ENCODE measurements at regions of chr7 and their contacts with region 1.

Region 1: DNA sequence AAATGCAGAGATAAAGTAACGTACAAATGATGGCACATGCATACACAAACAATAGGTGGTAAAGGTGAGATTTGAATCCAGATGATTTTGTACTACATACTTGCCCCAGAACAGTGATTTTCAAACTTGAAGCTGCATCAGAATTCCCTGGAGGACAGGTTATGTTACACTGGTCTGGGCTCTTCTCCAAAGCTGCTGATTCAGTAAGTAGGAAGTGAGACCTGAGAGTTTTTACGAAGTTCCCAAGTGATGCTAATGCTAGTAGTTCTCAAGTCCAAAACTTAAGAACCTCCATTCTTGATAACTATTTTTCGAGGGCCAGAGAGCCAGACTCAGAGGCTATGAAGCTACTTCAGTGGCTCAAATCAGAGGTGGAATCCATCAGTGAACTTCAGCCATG is 159.0 kb upstream of the POM121L12 start:
- DNase-seq: no peak
- ATAC-seq: no peak
- H3K4me3 ChIP-seq: no peak overlapping the region
- H3K27ac ChIP-seq: no peak overlapping the region
- H3K4me1 ChIP-seq: no peaks in the 10 kb centered on the region
- H3K27me3 ChIP-seq: no peaks in the 10 kb centered on the region
- CTCF ChIP-seq: no peak

Region 2: DNA sequence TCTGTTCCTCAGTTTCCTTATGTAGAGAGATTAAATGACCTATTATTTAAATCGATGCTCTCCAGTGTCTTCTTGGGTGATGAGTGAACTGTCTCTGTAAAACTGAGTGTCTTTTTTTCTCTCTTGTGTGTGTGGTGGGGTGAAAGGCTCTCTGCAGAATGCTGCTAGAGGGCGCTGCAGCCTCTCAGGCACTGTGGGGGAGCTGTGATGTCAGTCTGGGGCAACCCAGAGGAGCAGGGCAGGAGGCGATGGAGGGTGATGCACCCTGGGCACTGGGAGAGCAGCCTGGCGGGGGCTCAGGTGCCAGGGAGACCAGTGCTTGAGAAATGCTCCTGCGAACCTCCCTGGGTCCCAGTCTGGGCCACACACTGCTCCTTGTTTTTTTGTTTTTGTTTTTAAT is 48.9 kb after region 1 on chr7:
- CTCF ChIA-PET with region 1: no interaction called
- POLR2A ChIA-PET with region 1: no interaction called
- in situ Hi-C with region 1: no loop called
- intact Hi-C with region 1: loop called (anchors 5 kb)
- DNase-seq: no peak
- ATAC-seq: no peak
- H3K4me3 ChIP-seq: no peak overlapping the region
- H3K27ac ChIP-seq: no peak overlapping the region
- H3K4me1 ChIP-seq: no peaks in the 10 kb centered on the region
- H3K27me3 ChIP-seq: no peaks in the 10 kb centered on the region
- CTCF ChIP-seq: no peak

Region 3: GRCh38 chr7:52992479-52993162 is 116.2 kb after region 1 on chr7:
- CTCF ChIA-PET with region 1: no interaction called
- POLR2A ChIA-PET with region 1: no interaction called
- in situ Hi-C with region 1: no loop called
- intact Hi-C with region 1: no loop called
- DNase-seq: no peak
- ATAC-seq: no peak
- H3K4me3 ChIP-seq: no peak overlapping the region
- H3K27ac ChIP-seq: no peak overlapping the region
- H3K4me1 ChIP-seq: no peaks in the 10 kb centered on the region
- H3K27me3 ChIP-seq: no peaks in the 10 kb centered on the region
- CTCF ChIP-seq: no peak

Region 4: DNA sequence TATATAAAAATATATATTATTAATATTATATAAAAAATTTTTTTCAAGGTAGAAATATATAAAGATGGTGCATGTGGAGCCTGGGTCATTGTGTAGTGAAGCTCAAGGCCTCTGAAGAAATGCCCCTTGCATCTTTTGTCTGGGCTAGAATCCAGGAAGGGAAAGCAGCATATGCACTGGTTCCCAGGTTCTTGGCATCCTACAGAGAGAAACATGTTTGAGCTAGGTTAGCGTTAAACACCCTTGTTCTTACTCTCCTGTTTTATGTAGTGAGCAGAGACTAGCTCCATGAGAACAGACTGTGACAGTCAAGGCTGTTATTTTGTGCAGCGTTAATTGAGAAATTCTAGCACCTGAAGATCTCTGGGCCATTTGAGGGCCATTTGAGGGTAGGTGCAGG is 275.1 kb after region 1 on chr7:
- CTCF ChIA-PET with region 1: no interaction called
- POLR2A ChIA-PET with region 1: no interaction called
- in situ Hi-C with region 1: no loop called
- intact Hi-C with region 1: no loop called
- DNase-seq: no peak
- ATAC-seq: no peak
- H3K4me3 ChIP-seq: no peak overlapping the region
- H3K27ac ChIP-seq: no peak overlapping the region
- H3K4me1 ChIP-seq: no peaks in the 10 kb centered on the region
- H3K27me3 ChIP-seq: no peaks in the 10 kb centered on the region
- CTCF ChIP-seq: no peak

Measured in Panc1 (cell line).